PC-3 (cell line): ENCODE measurements at regions of chr18 and their contacts with region 1.

Region 1: DNA sequence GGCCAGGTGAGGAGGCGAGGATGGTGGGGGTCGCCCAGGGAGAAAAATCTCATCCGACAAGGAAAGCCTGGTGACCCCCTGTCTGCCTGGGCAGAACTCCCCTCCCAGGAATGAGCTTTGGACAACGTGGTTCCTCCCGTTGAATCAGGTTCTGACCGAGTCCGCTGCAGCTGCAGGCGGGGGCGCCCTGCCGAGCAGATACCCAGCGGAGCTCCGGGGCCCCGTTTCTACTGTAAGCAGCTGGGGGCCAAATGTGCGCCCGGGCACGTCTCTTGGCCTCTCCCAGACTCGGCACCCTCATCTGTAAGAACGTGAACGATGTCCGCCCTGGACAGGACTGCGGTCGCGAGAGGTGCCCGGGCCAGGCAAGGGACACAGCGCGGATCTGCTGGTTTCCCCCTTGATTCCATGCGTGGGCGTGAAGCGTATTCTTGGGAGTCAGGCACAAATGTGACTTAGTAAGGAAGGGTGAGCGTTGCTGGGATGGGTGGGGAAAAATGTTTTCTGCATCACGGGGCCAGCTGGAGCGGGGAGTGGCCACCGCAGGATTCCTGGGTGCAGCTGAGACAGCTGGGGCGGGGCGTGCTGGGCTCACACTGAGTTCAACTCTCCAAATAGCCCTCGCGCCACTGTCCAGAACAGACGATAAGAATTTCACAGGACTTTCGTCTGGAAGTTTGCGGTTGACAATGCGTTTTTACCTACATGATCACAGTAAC is 20.2 kb upstream of the TUBB6 start:
- DNase-seq: peak; percentile 85
- ATAC-seq: peak; percentile 88
- H3K4me3 ChIP-seq: peak overlapping the region; percentile 70
- H3K27ac ChIP-seq: peak overlapping the region; percentile 29
- H3K4me1 ChIP-seq: peaks cover 33% of the 10 kb centered on the region
- H3K27me3 ChIP-seq: no peaks in the 10 kb centered on the region
- CTCF ChIP-seq: no peak

Region 2: DNA sequence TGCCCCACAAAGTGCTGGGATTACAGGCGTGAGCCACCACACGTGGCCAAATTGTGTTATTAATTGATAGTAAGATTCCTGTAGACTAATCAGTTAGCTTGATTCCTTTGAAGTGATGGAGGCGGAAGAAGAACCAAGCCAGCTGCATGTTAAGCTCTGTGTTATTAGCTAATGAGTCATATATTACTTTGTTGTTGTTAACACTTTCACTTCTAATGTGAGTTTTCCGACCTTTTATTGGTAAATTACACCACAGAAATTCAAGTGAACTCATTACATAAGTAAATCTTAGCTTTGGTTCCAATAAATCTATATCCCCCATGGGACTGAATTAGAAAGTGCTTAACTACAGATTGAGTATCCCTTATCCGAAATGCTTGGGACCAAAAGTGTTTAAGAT is 416.3 kb before region 1 on chr18:
- CTCF ChIA-PET with region 1: no interaction called
- POLR2A ChIA-PET with region 1: no interaction called
- intact Hi-C with region 1: no loop called
- DNase-seq: no peak
- ATAC-seq: no peak
- H3K4me3 ChIP-seq: no peak overlapping the region
- H3K27ac ChIP-seq: no peak overlapping the region
- H3K4me1 ChIP-seq: peaks cover 11% of the 10 kb centered on the region
- H3K27me3 ChIP-seq: no peaks in the 10 kb centered on the region
- CTCF ChIP-seq: no peak

Region 3: DNA sequence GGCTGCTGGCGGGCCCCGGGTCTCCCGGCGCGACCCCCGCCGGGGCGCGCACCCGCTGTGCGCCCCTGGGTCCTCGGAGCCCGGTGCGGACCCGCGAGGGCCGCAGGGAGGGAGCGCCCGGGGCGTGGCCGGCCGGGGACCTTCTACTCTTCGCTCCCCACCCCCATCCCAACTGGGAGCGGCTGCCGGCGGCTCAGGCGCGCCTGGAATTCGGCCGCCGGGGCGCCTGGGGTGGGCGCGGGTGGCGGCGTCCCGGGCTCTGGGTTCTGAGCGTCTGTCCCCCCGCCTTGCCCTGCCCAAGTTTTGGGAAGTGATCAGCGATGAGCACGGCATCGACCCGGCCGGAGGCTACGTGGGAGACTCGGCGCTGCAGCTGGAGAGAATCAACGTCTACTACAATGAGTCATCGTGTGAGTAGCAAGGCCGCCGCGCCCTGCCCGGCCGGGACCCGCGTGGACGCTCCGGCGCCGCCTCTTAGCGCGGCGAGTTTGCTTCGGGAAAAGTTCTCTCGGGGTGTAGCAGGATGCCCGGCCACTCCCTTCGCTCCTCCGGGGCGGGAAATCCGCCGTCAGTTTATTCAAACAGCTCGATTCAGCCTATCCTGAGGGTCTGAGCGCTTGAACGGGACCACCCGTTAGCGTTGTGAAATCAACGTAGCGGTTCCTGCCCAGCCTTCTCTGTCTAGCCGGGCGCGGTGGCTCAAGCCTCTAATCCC is 20.7 kb after region 1 on chr18:
- CTCF ChIA-PET with region 1: interaction called, 3 read pairs
- POLR2A ChIA-PET with region 1: no interaction called
- intact Hi-C with region 1: loop called (anchors 1 kb)
- DNase-seq: peak; percentile 81
- ATAC-seq: peak; percentile 76
- H3K4me3 ChIP-seq: peak overlapping the region; percentile 71
- H3K27ac ChIP-seq: peak overlapping the region; percentile 78
- H3K4me1 ChIP-seq: peaks cover 22% of the 10 kb centered on the region
- H3K27me3 ChIP-seq: no peaks in the 10 kb centered on the region
- CTCF ChIP-seq: no peak